Stomach (tissue), 19 donors: ENCODE measurements at regions of chr12 and their contacts with region 1.

Region 1: GRCh38 chr12:118625050-118625675 is 248.8 kb downstream of the SUDS3 start:
- DNase-seq: peak in 1 of 2 donors; percentile 16
- H3K4me3 ChIP-seq: no peak overlapping the region
- H3K27ac ChIP-seq: no peak overlapping the region
- H3K4me1 ChIP-seq: no peaks in the 10 kb centered on the region
- H3K27me3 ChIP-seq: no peaks in the 10 kb centered on the region
- CTCF ChIP-seq: no peak
- EP300 ChIP-seq: no peak
- POLR2A ChIP-seq: no peak

Region 2: GRCh38 chr12:118220702-118221101 is 404.5 kb before region 1 on chr12:
- intact Hi-C with region 1: no loop called
- DNase-seq: no peak
- H3K4me3 ChIP-seq: no peak overlapping the region
- H3K27ac ChIP-seq: no peak overlapping the region
- H3K4me1 ChIP-seq: peaks cover 0 to 3% (median 0%) of the 10 kb centered on the region in 4 donors
- H3K27me3 ChIP-seq: no peaks in the 10 kb centered on the region
- CTCF ChIP-seq: no peak
- EP300 ChIP-seq: no peak
- POLR2A ChIP-seq: no peak

Region 3: DNA sequence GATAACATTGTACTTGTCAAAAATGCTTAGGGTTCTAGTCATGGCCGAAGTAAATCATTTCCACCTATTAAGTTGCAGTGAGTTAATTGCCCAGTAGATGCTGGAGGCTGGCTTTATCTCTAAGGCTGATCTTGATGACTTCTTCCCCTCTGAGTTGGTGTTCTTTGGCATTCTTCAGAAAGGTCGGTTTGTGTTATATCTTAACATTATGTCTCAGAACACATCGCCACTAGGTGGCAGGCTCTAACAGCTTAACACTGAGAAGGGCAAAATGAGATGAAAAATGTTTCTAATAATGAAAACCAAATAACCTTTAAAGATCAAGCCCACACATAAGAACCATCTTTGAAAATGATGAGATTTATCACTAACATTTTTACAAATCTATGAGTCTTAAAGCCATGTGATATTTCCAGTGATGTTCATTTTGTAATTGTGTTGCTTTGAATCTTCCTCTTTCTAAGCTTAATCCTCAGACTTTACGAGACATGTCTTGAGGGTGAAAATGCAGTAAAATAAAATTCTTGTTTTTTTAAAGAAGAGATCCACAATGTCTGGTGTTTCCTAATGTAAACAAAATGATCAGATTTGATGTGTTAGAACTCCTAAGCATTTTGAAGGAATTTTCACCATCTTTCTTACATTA is 220.2 kb before region 1 on chr12:
- intact Hi-C with region 1: loop called (anchors 10 kb)
- DNase-seq: peak; percentile 78 to 80
- H3K4me3 ChIP-seq: no peak overlapping the region
- H3K27ac ChIP-seq: peak overlapping the region in 1 of 5 donors; percentile 52
- H3K4me1 ChIP-seq: peaks cover 9 to 38% (median 23%) of the 10 kb centered on the region in 4 donors
- H3K27me3 ChIP-seq: no peaks in the 10 kb centered on the region
- CTCF ChIP-seq: peak in 5 of 7 experiments; percentile 26 to 71 (median 61)
- EP300 ChIP-seq: no peak
- POLR2A ChIP-seq: no peak

Region 4: DNA sequence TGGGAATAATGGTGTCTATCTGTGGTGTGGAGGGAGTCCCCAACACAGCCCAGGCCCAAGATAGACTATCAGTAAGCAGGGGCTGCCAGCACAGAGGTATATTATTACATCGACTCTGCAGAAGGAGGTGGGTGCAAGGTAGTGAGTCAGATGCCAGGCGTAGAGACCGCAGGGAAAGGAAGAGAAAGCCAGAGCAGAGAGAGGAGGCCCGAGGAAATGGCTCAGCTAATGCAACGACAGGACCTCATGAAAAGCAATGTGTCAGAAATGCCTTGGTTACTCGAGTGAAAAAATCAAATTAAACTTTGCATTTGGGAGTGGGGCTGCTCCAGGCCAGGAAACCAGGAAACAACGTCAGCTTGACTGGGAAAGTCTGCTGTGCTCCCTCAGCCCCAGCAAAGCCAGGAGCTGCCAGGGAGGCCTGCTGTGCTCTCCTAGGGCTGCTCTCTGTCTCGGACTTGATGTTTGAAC is 75.6 kb before region 1 on chr12:
- intact Hi-C with region 1: no loop called
- DNase-seq: no peak
- H3K4me3 ChIP-seq: no peak overlapping the region
- H3K27ac ChIP-seq: no peak overlapping the region
- H3K4me1 ChIP-seq: peaks cover 0 to 2% (median 0%) of the 10 kb centered on the region in 4 donors
- H3K27me3 ChIP-seq: no peaks in the 10 kb centered on the region
- CTCF ChIP-seq: no peak
- EP300 ChIP-seq: no peak
- POLR2A ChIP-seq: no peak

Region 5: GRCh38 chr12:119036878-119037825 is 412.0 kb after region 1 on chr12:
- intact Hi-C with region 1: no loop called
- DNase-seq: peak; percentile 31 to 36
- H3K4me3 ChIP-seq: no peak overlapping the region
- H3K27ac ChIP-seq: no peak overlapping the region
- H3K4me1 ChIP-seq: no peaks in the 10 kb centered on the region
- H3K27me3 ChIP-seq: peaks cover 0 to 13% (median 0%) of the 10 kb centered on the region in 3 donors
- CTCF ChIP-seq: peak in 4 of 7 experiments; percentile 22 to 63 (median 42)
- EP300 ChIP-seq: no peak
- POLR2A ChIP-seq: no peak